ENCODE measurements at regions of chr16 and their contacts with region 1.

Region 1: GRCh38 chr16:52383640-52384292 is 163.2 kb downstream of the TOX3 start:
- DNase-seq: no peak
- H3K4me3 ChIP-seq: no peak overlapping the region
- H3K27ac ChIP-seq: no peak overlapping the region
- H3K4me1 ChIP-seq: peaks cover 0 to 31% (median 12%) of the 10 kb centered on the region in 4 donors
- H3K27me3 ChIP-seq: no peaks in the 10 kb centered on the region
- CTCF ChIP-seq: no peak
- EP300 ChIP-seq: no peak
- POLR2A ChIP-seq: no peak

Region 2: GRCh38 chr16:52456368-52456767 is 72.6 kb after region 1 on chr16:
- intact Hi-C with region 1: no loop called
- DNase-seq: no peak
- H3K4me3 ChIP-seq: no peak overlapping the region
- H3K27ac ChIP-seq: no peak overlapping the region
- H3K4me1 ChIP-seq: peaks cover 0 to 11% (median 0%) of the 10 kb centered on the region in 4 donors
- H3K27me3 ChIP-seq: no peaks in the 10 kb centered on the region
- CTCF ChIP-seq: no peak
- EP300 ChIP-seq: no peak
- POLR2A ChIP-seq: no peak

Region 3: GRCh38 chr16:52547004-52547833 is 163.5 kb after region 1 on chr16 and contains the start of gene TOX3:
- intact Hi-C with region 1: loop called (anchors 10 kb)
- DNase-seq: no peak
- H3K4me3 ChIP-seq: peak within 1 kb of the TSS; percentile 31 to 50 (median 46)
- H3K27ac ChIP-seq: peak within 1 kb of the TSS in 1 of 4 donors; percentile 48
- H3K4me1 ChIP-seq: peaks cover 0 to 22% (median 18%) of the 10 kb centered on the region in 4 donors
- H3K27me3 ChIP-seq: peaks cover 27 to 64% (median 31%) of the 10 kb centered on the region in 3 donors
- CTCF ChIP-seq: no peak
- EP300 ChIP-seq: no peak
- POLR2A ChIP-seq: no peak
- total RNA-seq, gene TOX3: 0.28 to 2.0 (median 0.71) TPM in 3 of 4 donors, not detected in the other

Measured in sigmoid colon (tissue), 7 donors.